Naive thymus-derived CD4-positive, alpha-beta T cell (primary cell): ENCODE measurements at regions of chr6 and their contacts with region 1.

Region 1: GRCh38 chr6:25788305-25788922 is 33.9 kb downstream of the SLC17A4 start:
- DNase-seq: peak in 7 of 9 donors; percentile 5 to 34 (median 23)
- ATAC-seq: peak; percentile 70
- H3K4me3 ChIP-seq: no peak overlapping the region
- H3K4me3 Mint-ChIP-seq: no peak overlapping the region
- H3K27ac ChIP-seq: no peak overlapping the region
- H3K27ac Mint-ChIP-seq: no peak overlapping the region
- H3K4me1 ChIP-seq: no peaks in the 10 kb centered on the region
- H3K4me1 Mint-ChIP-seq: peaks cover 0 to 3% (median 0%) of the 10 kb centered on the region in 7 donors
- H3K27me3 ChIP-seq: no peaks in the 10 kb centered on the region
- H3K27me3 Mint-ChIP-seq: peaks cover 0 to 4% (median 0%) of the 10 kb centered on the region in 5 donors

Region 2: GRCh38 chr6:25882051-25882496 is 93.7 kb after region 1 on chr6:
- CTCF ChIA-PET with region 1: no interaction called
- POLR2A ChIA-PET with region 1: no interaction called
- intact Hi-C with region 1: loop called (anchors 1 to 2 kb)
- DNase-seq: peak in 7 of 9 donors; percentile 10 to 61 (median 35)
- ATAC-seq: peak; percentile 81
- H3K4me3 ChIP-seq: peak overlapping the region; percentile 53
- H3K4me3 Mint-ChIP-seq: peak overlapping the region in 8 of 10 donors; percentile 71 to 88 (median 84)
- H3K27ac ChIP-seq: no peak overlapping the region
- H3K27ac Mint-ChIP-seq: peak overlapping the region in 4 of 9 donors; percentile 16 to 60 (median 33)
- H3K4me1 ChIP-seq: no peaks in the 10 kb centered on the region
- H3K4me1 Mint-ChIP-seq: peaks cover 0 to 14% (median 0%) of the 10 kb centered on the region in 7 donors
- H3K27me3 ChIP-seq: no peaks in the 10 kb centered on the region
- H3K27me3 Mint-ChIP-seq: peaks cover 0 to 7% (median 0%) of the 10 kb centered on the region in 5 donors

Region 3: DNA sequence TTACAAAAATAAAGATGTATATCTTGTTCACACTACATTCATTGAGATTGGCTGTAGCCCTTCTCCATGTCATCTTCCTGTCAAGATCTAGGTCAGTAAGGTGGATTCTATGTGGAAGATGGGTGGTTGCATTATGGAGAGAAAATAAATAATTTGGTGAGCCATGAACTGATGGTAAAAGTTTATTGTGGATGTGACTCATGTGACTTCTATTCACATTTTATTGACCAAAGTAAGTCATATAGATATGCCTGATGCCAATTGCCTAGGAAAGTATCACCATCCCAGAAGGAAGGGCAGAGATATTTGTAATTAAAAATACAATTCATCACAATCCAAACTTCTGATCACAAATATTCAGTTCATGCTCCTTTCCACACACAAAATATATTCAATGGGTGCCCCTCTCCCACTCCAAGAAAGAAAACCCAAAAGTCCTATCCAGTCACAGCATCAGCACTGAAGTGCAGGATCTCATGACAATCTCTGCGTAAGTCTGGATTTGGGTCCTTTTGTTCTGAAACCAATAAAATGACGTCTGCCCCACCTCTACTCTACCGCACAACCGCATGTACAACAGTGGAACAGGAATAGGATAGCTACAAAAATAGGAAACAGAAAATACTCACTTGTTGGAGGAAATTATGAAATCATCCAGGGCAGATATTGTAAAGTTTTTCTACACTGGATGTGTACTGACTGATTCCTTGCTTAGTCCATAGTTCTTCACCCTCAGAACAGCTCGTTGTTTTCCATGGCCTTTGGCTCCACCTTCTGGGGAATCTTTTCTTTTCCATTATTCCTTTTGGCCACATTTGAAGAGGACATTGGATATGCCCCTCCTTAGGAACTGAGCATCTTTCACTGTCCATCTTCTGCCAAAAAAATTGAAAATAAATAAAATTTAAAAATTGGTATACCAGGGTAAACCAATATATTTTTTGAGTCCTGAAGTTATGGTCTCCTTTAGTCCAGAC is 101.8 kb after region 1 on chr6:
- CTCF ChIA-PET with region 1: interaction called, 4 read pairs
- POLR2A ChIA-PET with region 1: no interaction called
- intact Hi-C with region 1: loop called in 1 of 2 experiments (anchors 1 kb)
- DNase-seq: peak in 3 of 9 donors; percentile 7 to 14 (median 11)
- ATAC-seq: peak; percentile 44
- H3K4me3 ChIP-seq: no peak overlapping the region
- H3K4me3 Mint-ChIP-seq: no peak overlapping the region
- H3K27ac ChIP-seq: no peak overlapping the region
- H3K27ac Mint-ChIP-seq: peak overlapping the region in 1 of 9 donors; percentile 58
- H3K4me1 ChIP-seq: no peaks in the 10 kb centered on the region
- H3K4me1 Mint-ChIP-seq: peaks cover 0 to 1% (median 0%) of the 10 kb centered on the region in 7 donors
- H3K27me3 ChIP-seq: no peaks in the 10 kb centered on the region
- H3K27me3 Mint-ChIP-seq: peaks cover 0 to 14% (median 3%) of the 10 kb centered on the region in 5 donors

Region 4: DNA sequence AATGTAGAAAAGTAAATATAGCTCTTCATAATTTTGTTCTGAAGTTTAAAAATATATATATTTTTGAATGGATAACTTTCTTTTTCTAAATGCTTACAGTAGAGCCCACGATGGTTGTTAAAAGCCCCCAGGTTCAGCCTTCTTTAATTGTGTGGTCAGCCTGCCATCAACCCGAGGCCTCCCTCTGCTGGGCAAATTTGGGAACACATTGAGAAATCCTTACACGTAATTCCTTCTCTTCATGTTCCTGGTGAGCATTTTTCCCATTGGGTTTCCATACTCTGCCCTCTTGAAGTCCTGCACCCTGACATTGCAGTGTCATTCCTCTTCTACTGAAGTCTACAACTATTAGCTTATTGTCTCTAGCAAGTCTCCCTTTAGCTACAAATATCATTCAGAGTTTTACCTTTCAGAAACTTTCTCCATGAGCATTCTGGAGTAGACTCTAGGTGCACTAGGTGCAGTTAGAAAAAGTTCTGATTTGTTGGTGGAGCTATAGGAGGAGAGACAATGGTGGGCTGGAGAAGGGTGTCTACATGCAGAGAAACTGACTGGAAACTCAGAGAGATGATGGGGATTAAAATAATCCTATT is 214.8 kb after region 1 on chr6:
- CTCF ChIA-PET with region 1: interaction called, 17 read pairs
- POLR2A ChIA-PET with region 1: no interaction called
- intact Hi-C with region 1: loop called in 1 of 2 experiments (anchors 1 kb)
- DNase-seq: peak in 6 of 9 donors; percentile 34 to 44 (median 38)
- ATAC-seq: peak; percentile 63
- H3K4me3 ChIP-seq: no peak overlapping the region
- H3K4me3 Mint-ChIP-seq: no peak overlapping the region
- H3K27ac ChIP-seq: no peak overlapping the region
- H3K27ac Mint-ChIP-seq: no peak overlapping the region
- H3K4me1 ChIP-seq: no peaks in the 10 kb centered on the region
- H3K4me1 Mint-ChIP-seq: peaks cover 4 to 15% (median 10%) of the 10 kb centered on the region in 7 donors
- H3K27me3 ChIP-seq: no peaks in the 10 kb centered on the region
- H3K27me3 Mint-ChIP-seq: no peaks in the 10 kb centered on the region